PC-3 (cell line): ENCODE measurements at regions of chr12 and their contacts with region 1.

Region 1: GRCh38 chr12:96719660-96720363 is 187.2 kb upstream of the NEDD1 start:
- DNase-seq: peak; percentile 63
- ATAC-seq: peak; percentile 70
- H3K4me3 ChIP-seq: peak overlapping the region; percentile 73
- H3K27ac ChIP-seq: peak overlapping the region; percentile 10; the same call in 1 of the 2 replicates
- H3K4me1 ChIP-seq: peaks cover 10% of the 10 kb centered on the region; the same call in 1 of the 2 replicates
- H3K27me3 ChIP-seq: no peaks in the 10 kb centered on the region
- CTCF ChIP-seq: no peak

Region 2: DNA sequence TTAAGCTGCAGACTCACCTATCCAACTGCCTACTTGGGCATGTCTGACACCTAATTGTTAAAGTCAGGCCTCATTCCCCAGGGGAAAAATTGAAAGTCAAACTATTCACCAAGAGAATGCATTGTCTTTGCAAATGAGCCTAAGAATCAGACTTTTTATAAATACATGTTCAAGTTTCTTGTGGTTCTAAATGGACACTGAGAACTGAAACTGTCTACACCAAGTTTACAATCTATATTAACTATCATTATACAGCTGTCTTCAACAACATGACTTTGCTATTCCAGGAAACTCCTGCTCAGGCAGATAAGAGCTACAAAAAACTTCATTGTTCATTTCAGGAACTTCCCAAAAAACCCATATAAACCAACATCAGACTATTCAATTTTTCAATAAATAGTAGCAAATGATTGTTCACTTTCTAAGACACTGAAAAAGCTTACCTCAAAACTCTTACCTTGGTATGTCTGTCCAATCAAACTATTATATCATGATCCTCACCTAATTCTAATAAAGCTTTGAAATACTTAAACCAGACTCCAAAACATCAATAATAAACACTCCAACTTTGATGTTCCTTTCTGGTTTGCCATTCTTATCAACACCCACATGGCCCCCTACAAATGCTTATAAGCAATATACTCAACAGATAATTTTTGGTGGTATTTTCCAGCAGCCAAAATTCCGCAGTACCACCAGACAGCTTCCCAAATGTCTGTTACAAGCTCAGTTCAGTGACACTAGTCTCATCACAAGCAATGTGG is 343.8 kb before region 1 on chr12:
- CTCF ChIA-PET with region 1: no interaction called
- POLR2A ChIA-PET with region 1: no interaction called
- intact Hi-C with region 1: no loop called
- DNase-seq: no peak
- ATAC-seq: no peak
- H3K4me3 ChIP-seq: no peak overlapping the region
- H3K27ac ChIP-seq: no peak overlapping the region
- H3K4me1 ChIP-seq: no peaks in the 10 kb centered on the region
- H3K27me3 ChIP-seq: no peaks in the 10 kb centered on the region
- CTCF ChIP-seq: no peak

Region 3: DNA sequence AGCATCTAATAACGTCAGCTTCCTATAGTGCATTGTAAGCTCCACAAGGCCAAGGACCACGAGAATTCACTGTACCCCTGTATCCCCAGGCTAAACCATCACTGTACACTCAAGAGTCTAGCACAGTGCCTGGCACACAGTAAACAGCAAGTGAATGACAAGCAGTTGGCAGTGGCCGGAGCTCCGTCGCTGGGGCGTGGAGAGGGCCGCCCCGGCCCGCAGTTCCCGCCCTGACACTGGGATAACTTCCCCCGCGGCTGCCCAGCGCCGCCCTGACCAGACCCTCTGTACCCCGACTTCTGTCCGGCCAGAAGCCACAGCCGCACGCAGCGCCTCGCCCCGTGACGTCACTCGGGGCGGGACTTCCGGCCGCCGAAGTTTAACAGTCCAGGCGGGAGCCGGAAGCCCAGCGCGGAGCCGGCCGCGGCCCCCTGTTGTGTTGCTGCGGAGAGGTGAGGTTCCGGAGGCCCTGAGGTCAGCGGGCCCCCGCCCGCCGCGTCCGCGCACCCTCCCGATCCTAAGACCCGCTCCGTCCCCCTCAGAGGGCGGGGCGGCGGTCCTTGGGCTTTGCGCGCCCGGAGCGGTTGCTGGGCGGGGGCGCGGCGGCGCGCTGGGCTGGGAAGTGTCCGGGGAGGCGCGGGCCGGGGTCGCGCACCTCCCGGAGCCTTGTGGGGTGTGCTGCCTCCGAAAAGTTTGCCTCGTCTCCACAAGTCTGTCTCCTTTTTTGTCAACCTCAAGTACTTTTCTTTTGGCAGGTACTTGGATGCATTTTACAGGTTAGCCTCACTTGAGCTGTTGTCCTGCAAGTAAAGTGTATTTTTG is 187.2 kb after region 1 on chr12 and contains the start of gene NEDD1:
- CTCF ChIA-PET with region 1: no interaction called
- POLR2A ChIA-PET with region 1: no interaction called
- intact Hi-C with region 1: loop called (anchors 2 kb)
- DNase-seq: peak; percentile 82
- ATAC-seq: peak; percentile 88
- H3K4me3 ChIP-seq: peak within 1 kb of the TSS; percentile 91
- H3K27ac ChIP-seq: peak within 1 kb of the TSS; percentile 41
- H3K4me1 ChIP-seq: peaks cover 35% of the 10 kb centered on the region
- H3K27me3 ChIP-seq: no peaks in the 10 kb centered on the region
- CTCF ChIP-seq: no peak
- total RNA-seq, gene NEDD1: 28.6 and 43.4 TPM in 2 replicates